Left cardiac atrium (tissue), 4 donors: ENCODE measurements at regions of chr21 and their contacts with region 1.

Region 1: DNA sequence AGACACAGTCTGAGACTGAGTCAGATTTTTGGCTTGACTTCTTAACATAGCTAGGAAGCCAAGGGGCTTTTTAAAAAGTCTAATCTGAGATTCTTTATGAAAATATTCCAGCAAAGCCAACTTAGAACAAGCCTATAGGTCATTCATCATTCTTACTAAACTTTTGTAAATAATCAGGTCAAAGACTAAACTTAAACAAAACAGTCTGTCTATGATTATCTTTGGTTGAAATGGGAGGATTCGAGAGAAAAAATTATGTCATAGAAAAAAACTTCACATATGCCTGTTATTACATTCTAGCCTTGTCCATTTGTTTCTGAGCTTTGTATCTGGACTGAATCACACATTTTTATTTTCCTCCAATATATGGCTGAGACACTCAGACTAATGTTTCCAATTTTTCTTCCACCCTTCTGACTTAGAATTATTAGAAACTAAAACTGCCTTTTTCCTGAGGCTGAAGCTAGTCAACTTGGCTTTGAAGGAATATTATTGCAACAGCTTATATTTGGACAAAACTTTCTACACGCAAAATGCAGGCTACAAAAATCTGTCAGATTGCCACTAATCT is 83.3 kb downstream of the ETS2 start:
- DNase-seq: no peak
- ATAC-seq: peak; percentile 45 to 57

Region 2: GRCh38 chr21:38683226-38683625 is 205.8 kb before region 1 on chr21:
- intact Hi-C with region 1: no loop called
- DNase-seq: no peak
- ATAC-seq: no peak

Region 3: DNA sequence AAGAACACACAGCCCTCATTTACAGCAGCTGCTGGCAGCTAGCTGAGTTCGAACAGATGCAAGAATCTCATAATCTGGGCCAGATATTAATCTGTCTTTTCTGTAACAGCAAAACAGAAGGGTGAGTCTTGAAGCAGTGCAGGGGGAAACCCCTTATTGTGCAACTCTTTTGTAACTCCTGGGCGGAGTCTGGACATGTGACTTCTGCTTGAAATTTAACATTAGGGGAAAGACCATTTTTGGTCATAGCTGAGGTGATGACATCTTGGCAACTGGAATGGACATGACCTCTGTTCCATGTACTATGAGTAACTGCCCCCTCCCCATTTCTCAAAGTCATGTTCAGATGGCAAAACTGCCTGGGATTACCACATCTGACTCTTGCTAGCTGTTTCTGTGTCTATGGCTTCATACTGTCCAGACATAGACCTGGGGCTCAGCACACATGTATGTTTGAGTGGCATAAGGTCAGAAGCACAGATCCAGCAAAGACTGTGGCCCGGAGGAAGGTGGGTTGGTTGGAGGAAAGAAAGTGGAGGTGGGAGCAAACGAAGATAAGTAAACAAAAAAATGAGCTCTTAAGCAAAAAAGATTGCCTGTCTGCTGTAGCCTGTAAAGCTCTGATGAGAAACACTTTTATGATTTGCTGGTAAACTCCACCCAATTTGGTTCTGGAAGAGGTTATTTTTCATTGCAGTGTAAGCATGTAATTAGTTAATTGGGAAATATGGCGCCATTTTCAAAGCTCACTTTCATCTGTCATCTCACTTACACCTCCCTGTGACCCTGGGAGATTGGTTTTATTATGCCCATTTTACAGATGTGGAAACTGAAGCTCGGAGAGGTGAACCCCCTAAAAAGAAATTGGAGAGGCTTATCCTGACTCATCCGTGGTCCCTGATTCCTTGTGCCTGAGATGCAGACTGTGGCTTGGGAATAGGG is 57.3 kb before region 1 on chr21:
- intact Hi-C with region 1: loop called in 1 of 2 experiments (anchors 10 kb)
- DNase-seq: peak; percentile 69
- ATAC-seq: peak; percentile 94 to 96